Posterior vena cava (tissue), 2 donors: ENCODE measurements at regions of chr2 and their contacts with region 1.

Region 1: DNA sequence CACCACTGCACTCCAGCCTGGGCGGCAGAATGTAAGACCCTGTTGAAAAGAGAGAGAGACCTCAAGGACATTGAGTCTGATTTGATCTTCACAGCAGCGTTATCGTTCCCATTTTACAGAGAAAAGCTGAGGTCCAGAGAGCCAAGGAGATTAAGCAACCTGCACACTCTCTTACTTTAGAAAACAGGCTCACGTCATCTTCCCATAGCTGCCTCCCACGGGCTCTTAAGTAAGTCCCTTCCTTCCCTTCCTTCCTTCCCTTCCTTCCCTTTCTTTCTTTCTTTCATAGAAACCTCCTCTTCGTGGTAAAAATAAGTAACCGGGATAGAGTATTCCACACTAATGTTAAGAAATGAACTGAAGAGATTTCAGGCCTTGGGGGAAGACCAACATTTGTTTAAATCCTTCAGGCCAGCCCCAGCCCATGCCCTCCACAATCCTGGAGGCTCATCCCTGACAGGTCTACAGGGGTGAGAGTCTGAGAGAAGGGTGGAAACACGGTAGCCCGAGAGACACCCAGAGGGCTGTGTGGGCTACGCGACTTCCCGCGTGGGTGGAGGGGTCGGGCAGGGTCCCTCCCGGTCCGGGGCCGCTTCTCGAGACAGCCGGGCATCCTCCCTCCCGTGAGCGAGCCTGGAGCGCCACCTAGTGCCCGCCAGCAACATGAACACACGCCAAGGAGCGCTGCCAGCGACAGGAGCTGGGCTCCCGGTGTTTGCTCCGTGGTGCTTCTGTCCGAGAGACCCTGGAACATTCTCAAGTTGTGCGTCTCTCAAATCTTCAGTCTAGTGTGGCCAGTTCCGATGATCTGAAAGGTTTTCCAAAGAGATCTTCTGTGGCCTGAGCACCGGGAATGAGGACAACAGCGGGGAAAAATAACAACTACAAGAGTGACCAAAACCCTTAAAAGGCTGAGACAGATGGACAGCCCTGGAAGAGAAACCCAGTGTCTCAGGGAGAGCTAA is 160.3 kb downstream of the INO80D start:
- DNase-seq: peak; percentile 94

Region 2: GRCh38 chr2:205680067-205680466 is 245.6 kb before region 1 on chr2:
- intact Hi-C with region 1: loop called in 1 of 2 experiments (anchors 10 kb)
- DNase-seq: no peak

Region 3: GRCh38 chr2:205776139-205776538 is 149.5 kb before region 1 on chr2:
- intact Hi-C with region 1: loop called (anchors 10 kb)
- DNase-seq: peak; percentile 80

Region 4: DNA sequence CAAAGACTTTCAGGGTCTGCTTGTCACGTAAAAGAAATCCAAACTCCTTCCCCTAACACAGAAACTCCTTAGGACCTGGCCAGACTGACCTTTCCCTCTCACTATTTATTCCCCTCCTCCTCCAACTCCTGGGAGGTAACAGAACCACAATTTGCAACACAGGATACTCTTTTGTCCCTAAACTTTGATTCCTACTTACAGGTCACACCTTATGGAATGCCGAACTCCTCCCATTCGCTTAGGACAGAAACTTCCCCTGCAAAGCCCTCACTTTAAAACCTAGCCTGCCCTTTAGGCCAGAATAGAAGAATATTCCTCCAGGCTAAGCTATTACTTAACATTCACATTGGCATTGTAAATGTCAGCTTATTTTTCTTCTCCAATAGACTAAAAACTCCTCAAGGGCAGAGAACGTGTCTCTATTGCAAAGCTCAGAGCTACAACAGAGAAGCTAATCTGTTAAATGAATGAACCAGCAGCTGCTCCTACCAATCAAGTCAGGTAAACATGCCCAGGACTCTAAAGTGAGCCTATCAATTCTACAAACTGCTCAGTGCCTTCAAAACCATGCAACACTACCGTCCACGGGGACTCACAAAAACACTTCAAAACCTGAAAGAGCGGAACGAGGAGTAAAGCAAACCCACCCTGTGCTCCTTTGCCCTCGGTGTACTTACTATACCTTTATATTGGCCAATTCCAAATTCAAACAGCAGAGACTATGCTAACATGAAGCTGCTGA is 154.2 kb after region 1 on chr2:
- intact Hi-C with region 1: no loop called
- DNase-seq: no peak